ENCODE measurements at regions of chr9 and their contacts with region 1.

Region 1: GRCh38 chr9:109590945-109591344 is 92.8 kb upstream of the PTPN3 start:
- DNase-seq: no peak
- ATAC-seq: no peak
- H3K4me3 ChIP-seq: no peak overlapping the region
- H3K27ac ChIP-seq: no peak overlapping the region
- H3K4me1 ChIP-seq: no peaks in the 10 kb centered on the region
- H3K27me3 ChIP-seq: no peaks in the 10 kb centered on the region
- CTCF ChIP-seq: no peak

Region 2: DNA sequence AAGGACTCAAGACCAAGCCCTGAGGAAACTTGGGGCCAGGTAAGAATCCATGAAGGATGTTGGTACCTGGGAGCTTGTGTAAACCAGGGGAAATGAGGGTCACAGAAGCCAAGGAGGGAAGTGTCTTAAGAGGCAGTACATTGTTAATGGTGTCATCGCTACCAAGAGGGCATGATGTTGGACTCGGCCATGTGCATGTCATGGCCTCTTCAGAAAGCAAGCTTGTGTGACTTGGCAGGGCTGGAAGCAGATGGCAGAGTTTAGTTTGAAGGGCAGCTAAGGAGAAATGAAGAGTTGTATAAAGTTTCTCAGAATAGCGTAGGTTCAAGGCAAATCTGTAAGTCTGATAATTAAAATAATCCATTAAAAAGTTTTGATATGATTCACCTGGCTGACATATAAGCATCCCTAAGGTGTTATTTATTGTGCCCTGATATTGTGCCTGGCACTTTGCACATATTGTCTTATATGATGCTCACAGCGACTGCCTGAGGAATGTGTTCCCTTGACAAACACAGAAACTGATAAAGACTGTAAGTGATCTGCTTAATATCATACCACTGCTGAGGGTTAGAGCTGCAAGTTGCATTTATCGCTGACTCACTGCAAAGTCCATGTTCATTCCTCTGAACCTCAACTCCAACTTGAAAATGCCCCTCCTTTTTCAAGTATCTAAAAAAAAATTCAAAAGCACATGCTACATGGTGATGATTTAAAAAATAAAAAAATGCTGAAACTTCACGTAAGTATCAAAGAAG is 11.6 kb before region 1 on chr9:
- CTCF ChIA-PET with region 1: no interaction called
- POLR2A ChIA-PET with region 1: interaction called, 21 read pairs
- intact Hi-C with region 1: no loop called
- DNase-seq: no peak
- ATAC-seq: no peak
- H3K4me3 ChIP-seq: no peak overlapping the region
- H3K27ac ChIP-seq: no peak overlapping the region
- H3K4me1 ChIP-seq: no peaks in the 10 kb centered on the region
- H3K27me3 ChIP-seq: no peaks in the 10 kb centered on the region
- CTCF ChIP-seq: no peak

Region 3: GRCh38 chr9:109652964-109653363 is 62.0 kb after region 1 on chr9:
- CTCF ChIA-PET with region 1: no interaction called
- POLR2A ChIA-PET with region 1: no interaction called
- intact Hi-C with region 1: no loop called
- DNase-seq: peak; percentile 76
- ATAC-seq: peak; percentile 82
- H3K4me3 ChIP-seq: 0 out of 2 replicates have a peak overlapping the region, but pooled peaks have one; percentile 2
- H3K27ac ChIP-seq: peak overlapping the region; percentile 63
- H3K4me1 ChIP-seq: peaks cover 20% of the 10 kb centered on the region
- H3K27me3 ChIP-seq: no peaks in the 10 kb centered on the region
- CTCF ChIP-seq: peak; percentile 82

Region 4: DNA sequence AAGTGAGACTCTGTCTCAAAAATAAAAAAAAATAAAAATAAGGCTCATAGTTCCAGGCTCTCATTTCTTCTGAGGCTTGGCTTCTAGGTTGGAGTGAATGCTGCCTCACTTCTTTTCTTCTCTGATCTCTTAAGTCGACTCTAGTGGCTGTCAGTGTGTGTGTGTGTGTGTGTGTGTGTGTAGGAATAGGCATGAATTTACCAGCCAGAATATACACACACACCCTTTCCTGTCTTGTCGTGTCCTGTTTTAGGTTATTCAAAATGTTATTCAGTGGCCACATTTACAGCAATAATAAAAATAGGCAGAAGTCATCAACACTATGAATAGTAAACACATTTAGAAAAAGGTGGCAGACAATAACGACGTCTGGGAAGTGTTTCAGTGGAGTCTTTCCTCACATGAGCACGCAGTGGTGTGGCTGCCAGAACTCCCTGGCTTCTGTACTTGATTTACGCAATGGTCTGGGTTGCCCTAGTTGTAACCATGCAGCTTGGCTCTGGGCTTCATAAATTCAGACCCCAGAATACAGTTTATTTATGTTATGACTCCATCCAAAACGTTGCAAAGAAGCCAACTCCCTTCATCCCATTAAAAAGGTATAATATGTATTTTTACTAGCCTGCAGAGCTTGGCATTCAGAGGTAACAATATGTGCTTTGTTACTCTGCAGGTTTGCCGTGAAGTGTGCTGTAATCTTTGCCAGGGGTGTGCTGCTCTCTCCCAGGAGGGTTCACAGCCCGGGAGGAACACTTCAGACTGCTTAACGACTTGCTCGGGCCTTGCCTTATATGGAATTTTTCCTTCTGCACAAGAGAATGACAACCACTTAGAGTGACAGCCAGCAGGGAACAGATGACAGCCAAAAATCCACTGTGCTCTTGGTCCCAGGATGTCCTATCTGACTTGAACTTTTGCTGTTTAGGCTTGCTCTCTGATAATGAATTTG is 154.7 kb after region 1 on chr9:
- CTCF ChIA-PET with region 1: no interaction called
- POLR2A ChIA-PET with region 1: no interaction called
- intact Hi-C with region 1: no loop called
- DNase-seq: peak; percentile 40
- ATAC-seq: peak; percentile 91
- H3K4me3 ChIP-seq: no peak overlapping the region
- H3K27ac ChIP-seq: no peak overlapping the region
- H3K4me1 ChIP-seq: peaks cover 6% of the 10 kb centered on the region
- H3K27me3 ChIP-seq: no peaks in the 10 kb centered on the region
- CTCF ChIP-seq: no peak

Region 5: DNA sequence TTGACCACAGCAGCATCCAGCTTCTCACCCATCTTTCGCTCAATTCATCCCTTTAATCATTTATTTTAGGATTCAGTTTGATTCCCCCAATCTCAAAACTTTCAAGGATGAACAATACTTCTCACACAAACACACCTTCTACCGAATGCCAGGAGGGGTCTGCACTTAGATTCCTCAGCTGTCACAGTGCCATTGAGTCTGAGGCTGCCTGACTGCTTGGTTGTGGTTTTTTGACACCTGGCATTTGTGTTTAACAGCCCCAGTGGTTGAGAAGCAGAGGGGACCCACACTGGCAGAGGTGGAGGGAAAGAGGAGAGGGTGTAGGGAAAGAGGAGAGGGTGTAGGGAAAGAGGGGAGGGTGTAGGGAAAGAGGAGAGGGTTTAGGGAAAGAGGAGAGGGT is 243.9 kb after region 1 on chr9:
- CTCF ChIA-PET with region 1: no interaction called
- POLR2A ChIA-PET with region 1: no interaction called
- intact Hi-C with region 1: no loop called
- DNase-seq: no peak
- ATAC-seq: no peak
- H3K4me3 ChIP-seq: no peak overlapping the region
- H3K27ac ChIP-seq: no peak overlapping the region
- H3K4me1 ChIP-seq: no peaks in the 10 kb centered on the region
- H3K27me3 ChIP-seq: no peaks in the 10 kb centered on the region
- CTCF ChIP-seq: no peak

Measured in PC-3 (cell line).